Mammary epithelial cell (primary cell): ENCODE measurements at regions of chr3 and their contacts with region 1.

Region 1: GRCh38 chr3:8261018-8261417 is 240.6 kb upstream of the LMCD1 start:
- DNase-seq: no peak
- H3K4me3 ChIP-seq: no peak overlapping the region
- H3K27ac ChIP-seq: no peak overlapping the region
- H3K4me1 ChIP-seq: no peaks in the 10 kb centered on the region
- H3K27me3 ChIP-seq: no peaks in the 10 kb centered on the region
- CTCF ChIP-seq: no peak

Region 2: GRCh38 chr3:7625021-7625420 is 636.0 kb before region 1 on chr3:
- CTCF ChIA-PET with region 1: no interaction called
- dilution Hi-C with region 1: no loop called
- in situ Hi-C with region 1: no loop called
- intact Hi-C with region 1: loop called (anchors 5 kb)
- DNase-seq: no peak
- H3K4me3 ChIP-seq: no peak overlapping the region
- H3K27ac ChIP-seq: no peak overlapping the region
- H3K4me1 ChIP-seq: no peaks in the 10 kb centered on the region
- H3K27me3 ChIP-seq: no peaks in the 10 kb centered on the region
- CTCF ChIP-seq: no peak

Region 3: DNA sequence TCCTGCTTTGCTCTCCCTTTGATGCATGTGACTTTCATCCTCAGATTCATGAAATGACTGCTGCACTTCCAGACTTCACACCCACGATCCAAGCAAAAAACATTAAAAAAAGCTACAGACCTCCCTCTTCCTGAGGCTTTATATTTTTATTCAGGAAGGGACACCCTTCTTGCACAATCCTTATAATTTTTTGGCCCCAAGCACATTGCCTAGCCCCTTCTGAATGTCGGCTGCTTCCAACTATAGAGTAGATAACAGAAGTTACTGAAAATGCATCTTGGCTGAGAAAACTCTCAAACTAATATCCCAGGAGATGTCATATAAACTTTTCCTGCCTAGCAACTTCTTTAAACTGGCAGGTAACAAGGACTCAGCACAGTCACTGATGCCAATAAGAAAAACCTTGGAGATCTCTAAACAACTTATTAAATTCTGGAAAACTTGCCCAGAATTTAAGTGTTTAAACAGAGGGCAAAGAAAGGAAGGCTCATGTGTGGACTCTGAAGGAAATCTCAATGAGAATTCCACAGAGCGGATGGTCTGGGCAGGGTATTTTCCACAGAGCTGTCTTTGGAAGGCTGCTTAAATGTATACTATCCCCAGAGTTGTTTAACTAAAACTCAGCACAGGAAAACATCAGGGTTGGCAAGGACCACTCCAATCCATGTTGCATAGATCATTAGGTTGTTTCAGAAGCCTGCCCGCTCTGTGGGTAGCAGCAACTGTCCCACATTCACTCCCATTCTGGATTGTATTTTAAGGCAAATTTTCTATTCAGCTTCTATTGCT is 506.2 kb before region 1 on chr3:
- CTCF ChIA-PET with region 1: no interaction called
- dilution Hi-C with region 1: no loop called
- in situ Hi-C with region 1: no loop called
- intact Hi-C with region 1: no loop called
- DNase-seq: no peak
- H3K4me3 ChIP-seq: no peak overlapping the region
- H3K27ac ChIP-seq: no peak overlapping the region
- H3K4me1 ChIP-seq: no peaks in the 10 kb centered on the region
- H3K27me3 ChIP-seq: no peaks in the 10 kb centered on the region
- CTCF ChIP-seq: no peak